Sciatic nerve (tissue), 2 donors: ENCODE measurements at regions of chr3 and their contacts with region 1.

Region 1: DNA sequence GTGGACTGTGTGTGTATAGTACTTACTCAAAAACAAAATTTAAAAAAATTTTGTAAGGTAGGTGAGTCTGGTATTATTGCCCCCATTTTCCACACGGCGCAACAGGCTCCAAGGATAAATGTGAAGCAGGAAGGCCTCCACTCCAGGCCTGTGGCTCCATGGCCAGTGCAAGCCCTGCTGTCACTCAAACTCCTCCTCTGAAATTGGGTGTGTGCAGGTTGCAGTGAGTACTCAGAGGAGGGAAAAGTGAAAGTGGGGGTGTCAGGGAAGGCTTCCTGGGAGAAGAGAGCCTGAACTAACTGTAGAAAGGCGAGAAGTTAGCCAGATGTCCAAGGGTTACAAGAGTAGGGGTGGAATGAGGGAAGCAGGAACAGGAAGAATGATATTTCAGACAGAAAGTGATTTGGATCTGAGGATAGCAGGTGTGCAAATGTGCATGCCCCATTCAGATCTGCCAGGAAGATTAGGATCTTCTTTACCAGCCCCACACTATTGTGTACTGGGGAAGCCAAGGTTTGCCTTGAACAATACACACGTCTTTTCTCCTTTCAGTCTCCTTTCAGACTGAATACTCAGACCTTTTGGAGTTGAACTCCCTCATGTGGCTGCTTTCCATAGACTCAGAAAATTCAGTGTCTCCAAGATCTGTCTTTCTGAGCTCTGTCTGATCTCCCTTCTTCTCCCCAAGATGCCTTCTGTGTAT is 48.7 kb upstream of the RYK start:
- DNase-seq: no peak
- ATAC-seq: peak; percentile 85

Region 2: DNA sequence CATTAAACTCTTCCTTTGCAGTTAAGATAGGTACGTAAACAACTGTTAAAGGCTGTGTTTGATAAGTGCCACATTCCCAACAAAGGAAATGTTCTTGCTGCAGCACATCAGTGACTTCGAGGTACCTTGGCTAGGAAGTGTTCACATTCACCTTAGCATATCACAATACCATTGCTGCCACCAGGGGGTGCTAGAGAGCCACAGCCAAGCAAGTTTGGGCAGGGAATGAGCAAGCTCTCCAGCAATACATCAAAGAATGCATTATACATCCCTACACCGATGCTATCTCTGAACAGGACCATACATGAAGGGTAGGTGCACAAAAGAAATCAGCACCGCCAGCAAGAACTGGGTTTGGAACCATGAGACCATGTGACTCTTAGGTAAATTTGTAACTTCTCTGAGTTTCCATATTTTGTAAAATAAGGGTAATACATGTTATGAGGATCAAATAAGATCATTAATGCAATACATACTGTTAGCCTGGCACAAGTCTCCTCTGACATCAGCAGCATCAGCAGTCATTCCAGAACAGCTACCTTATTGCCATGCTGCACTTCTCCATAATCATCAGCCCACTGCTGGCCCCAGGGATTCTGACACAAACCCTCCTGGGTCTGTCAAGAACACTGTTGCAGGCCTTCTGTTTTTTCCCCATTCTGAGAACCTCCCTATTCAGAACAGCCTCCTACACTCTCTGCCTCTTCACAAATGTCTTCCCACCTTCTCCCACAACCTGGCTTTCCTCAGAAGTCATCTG is 86.2 kb before region 1 on chr3:
- intact Hi-C with region 1: loop called (anchors 5 kb)
- DNase-seq: peak; percentile 92
- ATAC-seq: peak; percentile 86

Region 3: GRCh38 chr3:134709561-134710312 is 410.4 kb after region 1 on chr3:
- intact Hi-C with region 1: loop called (anchors 5 kb)
- DNase-seq: no peak
- ATAC-seq: peak; percentile 68